PC-3 (cell line): ENCODE measurements at regions of chr6 and their contacts with region 1.

Region 1: GRCh38 chr6:56370561-56371211 is 123.3 kb upstream of the COL21A1 start:
- DNase-seq: peak; percentile 89
- ATAC-seq: peak; percentile 75
- H3K4me3 ChIP-seq: peak overlapping the region; percentile 56
- H3K27ac ChIP-seq: peak overlapping the region; percentile 92
- H3K4me1 ChIP-seq: peaks cover 36% of the 10 kb centered on the region
- H3K27me3 ChIP-seq: no peaks in the 10 kb centered on the region
- CTCF ChIP-seq: no peak

Region 2: DNA sequence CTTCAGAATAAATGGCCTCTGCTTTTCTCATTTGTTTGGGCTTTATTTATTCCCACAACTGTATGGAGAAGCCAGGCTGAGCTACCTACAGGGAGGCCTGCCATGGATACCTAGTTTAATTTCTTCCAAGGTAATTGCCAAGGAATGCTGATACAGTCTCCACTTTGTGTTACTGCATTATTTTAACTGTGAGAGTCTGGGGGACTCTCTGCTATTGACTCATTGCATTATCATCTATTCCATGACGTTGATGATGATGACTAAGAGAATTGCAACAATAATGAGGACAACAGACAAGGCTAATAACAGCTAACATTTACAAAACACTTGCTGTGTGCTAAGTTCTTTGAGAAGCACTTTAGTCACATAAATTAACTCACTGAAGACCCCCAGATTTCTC is 35.0 kb before region 1 on chr6:
- CTCF ChIA-PET with region 1: no interaction called
- POLR2A ChIA-PET with region 1: no interaction called
- intact Hi-C with region 1: no loop called
- DNase-seq: peak; percentile 95
- ATAC-seq: peak; percentile 81
- H3K4me3 ChIP-seq: peak overlapping the region; percentile 8; the same call in 1 of the 2 replicates
- H3K27ac ChIP-seq: peak overlapping the region; percentile 99
- H3K4me1 ChIP-seq: peaks cover 24% of the 10 kb centered on the region
- H3K27me3 ChIP-seq: no peaks in the 10 kb centered on the region
- CTCF ChIP-seq: no peak

Region 3: DNA sequence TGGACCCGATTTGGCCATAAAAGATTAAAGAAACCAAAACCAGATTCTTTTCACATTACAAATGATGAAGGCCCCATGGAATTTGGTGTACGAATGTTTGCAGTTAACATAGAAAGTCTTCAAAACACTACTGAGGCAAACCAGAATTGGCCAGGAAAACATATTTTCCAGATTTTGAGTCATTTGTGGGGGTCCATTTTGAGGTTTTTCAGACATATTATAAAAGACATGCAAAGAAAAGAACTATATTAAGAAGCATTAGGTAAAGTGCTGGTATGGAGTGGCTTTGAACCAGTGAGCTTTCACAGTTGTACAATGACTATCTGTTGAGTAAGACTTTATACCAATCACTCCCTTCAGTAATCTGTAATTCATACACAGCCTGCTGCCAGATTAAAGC is 45.6 kb after region 1 on chr6:
- CTCF ChIA-PET with region 1: no interaction called
- POLR2A ChIA-PET with region 1: no interaction called
- intact Hi-C with region 1: loop called (anchors 5 kb)
- DNase-seq: no peak
- ATAC-seq: no peak
- H3K4me3 ChIP-seq: no peak overlapping the region
- H3K27ac ChIP-seq: no peak overlapping the region
- H3K4me1 ChIP-seq: no peaks in the 10 kb centered on the region
- H3K27me3 ChIP-seq: no peaks in the 10 kb centered on the region
- CTCF ChIP-seq: no peak

Region 4: GRCh38 chr6:56437171-56437900 is 66.7 kb after region 1 on chr6:
- CTCF ChIA-PET with region 1: no interaction called
- POLR2A ChIA-PET with region 1: no interaction called
- intact Hi-C with region 1: loop called (anchors 5 kb)
- DNase-seq: peak; percentile 81
- ATAC-seq: peak; percentile 79
- H3K4me3 ChIP-seq: no peak overlapping the region
- H3K27ac ChIP-seq: no peak overlapping the region
- H3K4me1 ChIP-seq: peaks cover 25% of the 10 kb centered on the region
- H3K27me3 ChIP-seq: no peaks in the 10 kb centered on the region
- CTCF ChIP-seq: no peak

Region 5: GRCh38 chr6:56484669-56485068 is 114.0 kb after region 1 on chr6:
- CTCF ChIA-PET with region 1: no interaction called
- POLR2A ChIA-PET with region 1: no interaction called
- intact Hi-C with region 1: loop called (anchors 1 kb)
- DNase-seq: peak; percentile 90
- ATAC-seq: peak; percentile 83
- H3K4me3 ChIP-seq: peak overlapping the region; percentile 33
- H3K27ac ChIP-seq: peak overlapping the region; percentile 92
- H3K4me1 ChIP-seq: peaks cover 28% of the 10 kb centered on the region
- H3K27me3 ChIP-seq: no peaks in the 10 kb centered on the region
- CTCF ChIP-seq: no peak

Region 6: GRCh38 chr6:56549014-56549413 is 178.3 kb after region 1 on chr6:
- CTCF ChIA-PET with region 1: interaction called, 24 read pairs
- POLR2A ChIA-PET with region 1: no interaction called
- intact Hi-C with region 1: loop called (anchors 1 kb)
- DNase-seq: peak; percentile 60
- ATAC-seq: peak; percentile 81
- H3K4me3 ChIP-seq: no peak overlapping the region
- H3K27ac ChIP-seq: no peak overlapping the region
- H3K4me1 ChIP-seq: peaks cover 12% of the 10 kb centered on the region; the same call in 1 of the 2 replicates
- H3K27me3 ChIP-seq: no peaks in the 10 kb centered on the region
- CTCF ChIP-seq: peak; percentile 79

Region 7: DNA sequence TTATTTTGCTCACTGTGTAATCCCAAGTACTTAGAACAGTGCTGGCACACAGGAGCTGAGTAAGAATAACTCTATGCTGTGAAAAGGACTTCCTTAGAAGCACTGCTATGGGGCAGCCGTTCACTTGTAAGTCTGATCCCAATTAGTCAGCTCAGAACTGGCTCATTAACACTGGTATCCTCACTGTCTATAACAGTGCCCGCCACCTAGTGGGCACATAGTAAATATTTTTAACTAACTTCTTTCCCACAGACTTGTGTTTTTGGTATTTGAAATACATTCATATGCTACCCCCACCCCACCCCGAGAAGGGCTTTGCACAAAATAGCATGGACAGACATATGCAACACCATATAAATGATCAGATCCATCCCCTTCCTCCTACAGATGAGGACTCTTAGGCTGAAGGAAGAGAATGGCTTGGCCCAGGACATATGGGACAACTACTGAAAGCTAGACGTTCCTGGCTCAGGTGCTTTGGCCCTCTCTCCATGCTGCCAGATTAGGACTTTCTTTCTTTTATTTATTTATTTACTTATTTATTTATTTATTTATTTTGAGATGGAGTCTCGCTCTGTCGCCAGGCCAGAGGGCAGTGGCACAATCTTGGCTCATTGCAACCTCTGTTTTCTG is 224.9 kb after region 1 on chr6:
- CTCF ChIA-PET with region 1: interaction called, 12 read pairs
- POLR2A ChIA-PET with region 1: no interaction called
- intact Hi-C with region 1: loop called (anchors 2 kb)
- DNase-seq: peak; percentile 37
- ATAC-seq: peak; percentile 73
- H3K4me3 ChIP-seq: no peak overlapping the region
- H3K27ac ChIP-seq: no peak overlapping the region
- H3K4me1 ChIP-seq: no peaks in the 10 kb centered on the region
- H3K27me3 ChIP-seq: no peaks in the 10 kb centered on the region
- CTCF ChIP-seq: peak; percentile 80